Activated T-helper 2 cell treated with anti-CD3 and anti-CD28 coated beads, Interferon-gamma antibody, Interleukin-2, Interleukin-4, amounts not matched to agents 10 μg/mL and 5 μg/mL and 100 μg/mL, durations not matched to agents 14 hours and 24 hours and 36 hours (primary cell): ENCODE measurements at regions of chr16 and their contacts with region 1.

Region 1: DNA sequence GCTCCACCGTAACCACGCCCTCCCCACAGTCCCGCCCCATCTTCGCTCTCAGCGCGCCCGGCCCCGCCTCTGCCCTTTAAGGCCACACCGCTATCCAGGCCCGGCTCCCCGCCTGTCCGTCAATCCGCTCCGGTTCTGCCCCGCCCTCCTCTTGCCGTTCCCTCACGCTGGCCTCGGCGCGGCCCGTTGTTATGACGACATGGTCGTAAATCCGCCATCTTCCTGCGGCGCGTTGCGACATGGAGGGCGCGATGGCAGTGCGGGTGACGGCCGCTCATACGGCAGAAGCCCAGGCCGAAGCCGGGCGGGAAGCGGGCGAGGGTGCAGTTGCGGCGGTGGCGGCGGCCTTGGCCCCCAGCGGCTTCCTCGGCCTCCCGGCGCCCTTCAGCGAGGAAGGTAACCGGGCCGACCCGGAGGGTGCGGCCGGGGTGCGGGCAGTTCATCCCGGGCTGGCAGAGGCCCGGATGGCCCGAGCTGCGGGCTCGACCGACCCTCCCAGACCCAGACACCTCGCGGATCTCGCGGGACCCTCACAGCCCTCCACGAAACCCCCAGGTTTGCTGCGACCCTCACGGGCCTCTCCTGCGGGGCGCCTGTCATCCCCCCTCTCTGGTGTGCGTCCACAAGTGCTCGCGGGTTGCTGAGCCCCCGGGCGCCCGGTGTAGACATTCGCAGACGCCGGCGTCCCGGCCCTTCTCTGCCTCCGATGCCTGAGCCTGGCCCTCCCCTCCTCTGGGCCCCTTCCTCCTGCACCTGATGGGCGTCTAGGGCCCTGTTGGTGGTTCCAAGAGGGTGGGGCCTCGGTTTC is at the start of gene E4F1:
- DNase-seq: peak; percentile 100
- H3K4me3 Mint-ChIP-seq: peak within 1 kb of the TSS; percentile 82
- H3K27ac Mint-ChIP-seq: peak within 1 kb of the TSS; percentile 75
- H3K4me1 Mint-ChIP-seq: peaks cover 8% of the 10 kb centered on the region
- H3K27me3 Mint-ChIP-seq: no peaks in the 10 kb centered on the region
- total RNA-seq, gene E4F1: 29.3 and 30.0 TPM in 2 replicates

Region 2: DNA sequence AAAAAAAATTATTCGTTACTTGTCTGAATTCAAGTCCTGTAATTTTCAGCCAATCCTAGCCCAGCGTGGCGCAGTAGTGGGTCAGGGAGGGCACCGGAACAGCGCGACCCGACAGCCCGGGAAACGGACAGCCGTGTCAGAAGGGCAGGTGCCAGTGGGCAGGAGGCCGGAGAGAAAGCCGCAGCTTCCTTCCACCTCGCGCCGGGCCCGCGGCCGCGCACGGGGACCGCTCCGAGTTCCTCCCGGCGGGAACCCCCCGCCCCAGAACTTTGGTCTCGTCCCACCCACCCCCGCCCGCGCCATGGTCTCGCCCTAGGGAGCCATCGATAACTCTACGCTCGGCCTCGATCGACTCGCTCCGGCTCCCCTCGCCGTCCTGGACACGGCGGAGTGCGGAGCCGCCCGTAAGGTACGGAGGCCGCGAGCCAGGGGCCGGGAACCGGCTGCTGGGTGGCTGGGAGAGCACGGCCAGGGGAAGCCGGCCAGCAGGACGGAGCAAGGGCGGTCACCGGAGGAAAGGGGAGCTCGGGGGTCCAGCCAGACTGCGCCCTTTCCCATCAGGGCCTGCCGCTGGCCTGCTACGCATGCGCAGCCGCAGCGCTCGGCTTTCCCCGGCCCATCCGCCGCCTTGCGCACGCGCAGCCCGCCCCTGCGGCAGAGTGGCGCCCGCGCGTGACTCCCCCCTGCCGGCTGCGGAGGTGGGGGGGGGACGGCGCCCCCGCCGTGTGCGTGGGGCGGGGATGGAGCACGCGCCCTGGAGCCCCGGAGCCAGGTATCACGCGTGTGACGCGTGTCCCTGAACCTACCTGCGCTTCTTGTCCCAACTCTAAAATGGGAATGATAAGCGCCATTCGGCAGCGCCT is 18.2 kb before region 1 on chr16 and contains the start of gene MLST8:
- intact Hi-C with region 1: loop called (anchors 1 kb)
- DNase-seq: peak; percentile 89
- H3K4me3 Mint-ChIP-seq: peak within 1 kb of the TSS; percentile 81
- H3K27ac Mint-ChIP-seq: peak within 1 kb of the TSS; percentile 69
- H3K4me1 Mint-ChIP-seq: peaks cover 18% of the 10 kb centered on the region
- H3K27me3 Mint-ChIP-seq: peaks cover 12% of the 10 kb centered on the region
- total RNA-seq, gene MLST8: 54.3 and 56.4 TPM in 2 replicates